ENCODE measurements at regions of chr3 and their contacts with region 1.

Region 1: DNA sequence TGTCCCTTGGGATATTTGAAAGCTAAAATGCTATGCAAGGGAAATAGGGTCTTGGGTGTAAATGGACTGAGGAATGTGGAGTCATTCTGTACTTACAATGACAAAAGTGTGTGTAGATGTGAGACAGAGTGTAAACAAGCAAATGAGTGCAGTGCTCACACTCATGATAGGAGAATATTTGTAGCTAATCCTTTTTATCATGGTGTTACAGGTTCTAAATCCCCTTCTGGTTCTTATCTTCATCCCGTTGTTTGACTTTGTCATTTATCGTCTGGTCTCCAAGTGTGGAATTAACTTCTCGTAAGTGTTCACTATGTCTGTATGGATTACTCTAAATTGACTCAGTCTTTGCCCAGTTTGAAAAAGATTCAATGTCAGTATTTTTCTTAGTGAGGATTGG is 30.5 kb downstream of the SLC15A2 start:
- DNase-seq: no peak
- H3K4me3 ChIP-seq: no peak overlapping the region
- H3K27ac ChIP-seq: no peak overlapping the region
- H3K4me1 ChIP-seq: no peaks in the 10 kb centered on the region
- H3K27me3 ChIP-seq: no peaks in the 10 kb centered on the region
- CTCF ChIP-seq: no peak
- POLR2A ChIP-seq: no peak

Region 2: GRCh38 chr3:121883507-121883906 is 41.2 kb before region 1 on chr3:
- intact Hi-C with region 1: loop called (anchors 2 kb)
- DNase-seq: no peak
- H3K4me3 ChIP-seq: no peak overlapping the region
- H3K27ac ChIP-seq: no peak overlapping the region
- H3K4me1 ChIP-seq: no peaks in the 10 kb centered on the region
- H3K27me3 ChIP-seq: no peaks in the 10 kb centered on the region
- CTCF ChIP-seq: no peak
- POLR2A ChIP-seq: no peak

Measured in vagina (tissue), 2 donors.